Naive thymus-derived CD4-positive, alpha-beta T cell (primary cell): ENCODE measurements at regions of chr5 and their contacts with region 1.

Region 1: GRCh38 chr5:151164686-151165392 is 7.3 kb upstream of the ANXA6 start:
- DNase-seq: peak; percentile 50 to 85 (median 81)
- ATAC-seq: peak; percentile 96
- H3K4me3 ChIP-seq: no peak overlapping the region
- H3K4me3 Mint-ChIP-seq: peak overlapping the region in 1 of 10 donors; percentile 51
- H3K27ac ChIP-seq: no peak overlapping the region
- H3K27ac Mint-ChIP-seq: peak overlapping the region in 8 of 9 donors; percentile 20 to 87 (median 54)
- H3K4me1 ChIP-seq: peaks cover 0 to 8% of the 10 kb centered on the region in 2 donors
- H3K4me1 Mint-ChIP-seq: peaks cover 1 to 42% (median 28%) of the 10 kb centered on the region in 7 donors
- H3K27me3 ChIP-seq: no peaks in the 10 kb centered on the region
- H3K27me3 Mint-ChIP-seq: no peaks in the 10 kb centered on the region

Region 2: DNA sequence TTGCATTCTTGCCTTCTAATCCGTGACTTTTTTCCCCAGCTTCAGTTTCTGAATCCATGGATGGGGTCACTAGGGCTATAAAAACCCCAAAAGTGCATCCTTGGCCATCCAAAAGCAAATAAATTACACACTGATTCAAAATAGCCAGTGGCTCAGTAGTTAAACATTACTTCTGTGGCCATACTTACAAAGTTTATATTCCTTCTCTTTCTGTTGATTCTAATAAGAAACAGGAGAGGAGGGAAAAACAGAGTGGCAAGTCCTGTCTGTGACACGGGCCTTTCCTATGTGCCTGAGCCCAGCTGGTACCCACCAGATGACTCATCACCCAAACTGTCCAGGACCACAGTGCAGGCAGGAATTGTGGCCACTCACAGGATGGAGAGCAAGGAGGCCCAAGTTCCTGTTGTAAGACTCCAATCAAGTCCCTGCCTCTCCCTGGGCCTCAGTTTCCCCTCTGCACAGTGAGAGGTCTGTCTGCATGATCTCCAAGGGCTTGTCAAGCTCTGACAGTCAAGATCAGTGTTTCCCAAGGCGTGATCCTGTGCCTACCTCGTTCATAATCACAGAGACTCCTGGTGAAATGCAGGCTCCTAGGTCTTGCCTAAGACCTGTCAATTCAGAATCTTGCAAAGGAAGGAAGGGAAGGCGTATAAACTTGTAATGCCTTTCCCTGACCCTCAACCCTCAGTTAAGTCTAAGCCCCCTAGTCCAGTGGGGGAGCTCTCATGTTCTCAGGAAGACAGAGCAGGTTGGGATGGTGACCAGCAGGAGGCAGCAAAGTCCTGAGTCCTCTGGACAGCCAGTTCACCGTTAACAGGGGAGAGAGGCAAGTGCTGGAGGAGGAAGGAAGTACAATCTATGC is 113.5 kb before region 1 on chr5:
- CTCF ChIA-PET with region 1: interaction called, 40 read pairs
- POLR2A ChIA-PET with region 1: interaction called, 3 read pairs
- intact Hi-C with region 1: loop called (anchors 1 kb)
- DNase-seq: peak; percentile 39 to 68 (median 63)
- ATAC-seq: peak; percentile 85
- H3K4me3 ChIP-seq: no peak overlapping the region
- H3K4me3 Mint-ChIP-seq: no peak overlapping the region
- H3K27ac ChIP-seq: no peak overlapping the region
- H3K27ac Mint-ChIP-seq: peak overlapping the region in 7 of 9 donors; percentile 29 to 63 (median 44)
- H3K4me1 ChIP-seq: no peaks in the 10 kb centered on the region
- H3K4me1 Mint-ChIP-seq: peaks cover 0 to 33% (median 7%) of the 10 kb centered on the region in 7 donors
- H3K27me3 ChIP-seq: no peaks in the 10 kb centered on the region
- H3K27me3 Mint-ChIP-seq: no peaks in the 10 kb centered on the region

Region 3: DNA sequence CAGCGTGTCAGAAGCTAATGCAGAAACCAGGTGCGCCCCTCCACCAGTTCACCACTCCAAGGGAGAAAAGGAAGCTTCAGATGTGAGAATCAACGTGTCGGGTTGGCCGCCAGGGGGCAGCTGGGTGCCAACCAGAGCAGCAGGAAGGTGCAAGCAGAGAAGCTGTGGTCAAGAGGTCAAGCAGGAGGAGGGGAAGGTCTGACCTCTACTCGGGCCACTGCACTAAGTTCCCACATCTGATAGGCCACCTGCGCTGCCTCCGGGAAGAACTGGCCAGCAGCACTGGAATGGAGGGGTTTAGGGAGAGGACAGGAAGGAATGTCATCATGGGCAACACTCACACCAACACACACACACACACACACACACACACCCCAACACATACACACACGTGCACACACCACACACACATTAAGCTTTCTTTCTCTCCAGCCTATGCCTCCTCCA is 38.6 kb before region 1 on chr5:
- CTCF ChIA-PET with region 1: interaction called, 403 read pairs
- POLR2A ChIA-PET with region 1: interaction called, 760 read pairs
- intact Hi-C with region 1: loop called (anchors 1 kb)
- DNase-seq: peak; percentile 41 to 71 (median 64)
- ATAC-seq: peak; percentile 73
- H3K4me3 ChIP-seq: no peak overlapping the region
- H3K4me3 Mint-ChIP-seq: peak overlapping the region in 9 of 10 donors; percentile 22 to 84 (median 54)
- H3K27ac ChIP-seq: peak overlapping the region; percentile 72
- H3K27ac Mint-ChIP-seq: peak overlapping the region; percentile 68 to 99 (median 91)
- H3K4me1 ChIP-seq: peaks cover under 1 to 27% of the 10 kb centered on the region in 2 donors
- H3K4me1 Mint-ChIP-seq: peaks cover 32 to 75% (median 57%) of the 10 kb centered on the region in 7 donors
- H3K27me3 ChIP-seq: no peaks in the 10 kb centered on the region
- H3K27me3 Mint-ChIP-seq: no peaks in the 10 kb centered on the region

Region 4: GRCh38 chr5:151141535-151141934 is 23.3 kb before region 1 on chr5:
- CTCF ChIA-PET with region 1: interaction called, 31 read pairs
- POLR2A ChIA-PET with region 1: interaction called, 760 read pairs
- intact Hi-C with region 1: no loop called
- DNase-seq: peak in 7 of 9 donors; percentile 39 to 62 (median 53)
- ATAC-seq: peak; percentile 80
- H3K4me3 ChIP-seq: peak overlapping the region; percentile 44
- H3K4me3 Mint-ChIP-seq: peak overlapping the region; percentile 68 to 96 (median 88)
- H3K27ac ChIP-seq: peak overlapping the region; percentile 67
- H3K27ac Mint-ChIP-seq: peak overlapping the region; percentile 81 to 99 (median 92)
- H3K4me1 ChIP-seq: peaks cover 85 to 88% of the 10 kb centered on the region in 2 donors
- H3K4me1 Mint-ChIP-seq: peaks cover 84 to 100% (median 96%) of the 10 kb centered on the region in 7 donors
- H3K27me3 ChIP-seq: no peaks in the 10 kb centered on the region
- H3K27me3 Mint-ChIP-seq: no peaks in the 10 kb centered on the region

Region 5: GRCh38 chr5:151223469-151224264 is 58.8 kb after region 1 on chr5 and contains the start of gene CCDC69:
- CTCF ChIA-PET with region 1: interaction called, 14 read pairs
- POLR2A ChIA-PET with region 1: interaction called, 13 read pairs
- intact Hi-C with region 1: no loop called
- DNase-seq: peak; percentile 27 to 64 (median 47)
- ATAC-seq: peak; percentile 69
- H3K4me3 ChIP-seq: peak within 1 kb of the TSS; percentile 95
- H3K4me3 Mint-ChIP-seq: peak within 1 kb of the TSS; percentile 80 to 97 (median 92)
- H3K27ac ChIP-seq: peak within 1 kb of the TSS; percentile 93
- H3K27ac Mint-ChIP-seq: peak within 1 kb of the TSS; percentile 87 to 98 (median 98)
- H3K4me1 ChIP-seq: peaks cover 51 to 56% of the 10 kb centered on the region in 2 donors
- H3K4me1 Mint-ChIP-seq: peaks cover 48 to 67% (median 60%) of the 10 kb centered on the region in 7 donors
- H3K27me3 ChIP-seq: no peaks in the 10 kb centered on the region
- H3K27me3 Mint-ChIP-seq: no peaks in the 10 kb centered on the region
- total RNA-seq, gene CCDC69: 63.6 to 104 (median 94.1) TPM

Region 6: GRCh38 chr5:151298063-151298855 is 133.4 kb after region 1 on chr5:
- CTCF ChIA-PET with region 1: no interaction called
- POLR2A ChIA-PET with region 1: no interaction called
- intact Hi-C with region 1: loop called in 1 of 2 experiments (anchors 1 kb)
- DNase-seq: peak in 3 of 9 donors; percentile 10 to 21 (median 14)
- ATAC-seq: no peak
- H3K4me3 ChIP-seq: no peak overlapping the region
- H3K4me3 Mint-ChIP-seq: no peak overlapping the region
- H3K27ac ChIP-seq: no peak overlapping the region
- H3K27ac Mint-ChIP-seq: no peak overlapping the region
- H3K4me1 ChIP-seq: no peaks in the 10 kb centered on the region
- H3K4me1 Mint-ChIP-seq: peaks cover 0 to 9% (median 0%) of the 10 kb centered on the region in 7 donors
- H3K27me3 ChIP-seq: no peaks in the 10 kb centered on the region
- H3K27me3 Mint-ChIP-seq: peaks cover 8 to 35% (median 26%) of the 10 kb centered on the region in 5 donors